ENCODE measurements at regions of chr2 and their contacts with region 1.

Region 1: DNA sequence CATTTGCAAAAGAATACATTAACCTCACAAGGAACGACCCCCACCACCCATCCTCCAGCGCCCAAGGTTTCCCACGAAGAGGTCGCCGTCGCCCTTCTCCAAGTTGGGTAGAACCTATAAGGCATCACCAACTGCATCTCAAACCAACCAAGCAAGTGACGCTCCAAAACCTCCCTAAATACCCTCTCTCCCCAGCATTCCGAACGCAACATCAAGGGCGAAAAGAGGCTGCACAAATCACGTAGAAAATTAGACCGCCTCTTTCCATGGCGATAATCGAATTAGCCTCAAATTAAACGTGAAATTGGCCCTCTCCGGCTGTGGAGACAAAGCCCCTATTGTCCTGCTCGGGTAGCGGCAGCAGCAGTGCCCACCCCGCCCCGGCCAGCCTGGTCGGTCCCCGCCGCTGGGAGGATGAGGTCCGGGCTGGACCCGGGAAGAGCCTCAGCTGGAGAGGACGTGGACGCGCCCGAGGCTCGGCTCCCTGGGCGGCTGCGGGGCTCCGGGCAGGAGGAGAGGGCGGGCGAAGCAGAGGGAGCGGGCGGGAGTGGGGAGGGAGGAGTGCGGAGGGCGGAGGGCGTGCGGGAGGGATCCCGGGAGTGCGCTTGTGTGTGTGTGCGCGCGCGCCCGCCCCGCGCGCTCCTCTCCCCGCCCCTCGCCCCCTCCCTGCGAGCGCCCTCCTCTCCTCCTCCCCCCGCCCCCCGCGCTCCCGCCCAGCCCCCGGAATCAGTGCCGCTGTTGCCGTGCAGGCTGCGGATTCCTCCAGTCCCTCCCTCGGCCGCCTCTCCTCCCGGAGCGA is at the start of gene SPTBN1:
- DNase-seq: peak; percentile 97
- H3K4me3 ChIP-seq: peak within 1 kb of the TSS; percentile 79 to 85 (median 83)
- H3K27ac ChIP-seq: peak within 1 kb of the TSS; percentile 96 to 98 (median 96)
- H3K4me1 ChIP-seq: peaks cover 0 to 40% (median 29%) of the 10 kb centered on the region in 4 donors
- H3K27me3 ChIP-seq: no peaks in the 10 kb centered on the region
- CTCF ChIP-seq: no peak
- EP300 ChIP-seq: no peak
- POLR2A ChIP-seq: peak; percentile 57 to 75
- total RNA-seq, gene SPTBN1: 169 to 273 (median 259) TPM

Region 2: DNA sequence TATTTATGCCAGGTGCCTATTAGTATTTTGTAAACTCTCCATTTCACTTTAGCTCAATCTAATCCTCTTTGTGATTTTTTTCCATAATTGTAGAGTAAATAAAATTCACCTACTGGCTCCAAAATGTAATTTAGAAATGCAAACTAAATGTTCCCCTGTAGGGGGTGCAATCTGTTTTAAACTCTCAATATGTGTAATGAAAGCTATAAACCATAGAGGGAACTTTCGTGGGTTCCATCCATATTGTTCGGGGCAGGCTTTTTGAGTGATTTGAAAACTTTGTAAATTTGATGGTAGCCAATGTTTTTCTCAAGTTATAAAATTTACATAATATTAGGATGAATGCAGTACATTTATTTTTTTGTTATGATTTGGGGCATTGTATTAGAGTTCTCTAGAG is 249.2 kb before region 1 on chr2:
- intact Hi-C with region 1: loop called (anchors 5 kb)
- DNase-seq: no peak
- H3K4me3 ChIP-seq: no peak overlapping the region
- H3K27ac ChIP-seq: no peak overlapping the region
- H3K4me1 ChIP-seq: peaks cover 0 to 21% (median 14%) of the 10 kb centered on the region in 4 donors
- H3K27me3 ChIP-seq: no peaks in the 10 kb centered on the region
- CTCF ChIP-seq: peak; percentile 51 to 63 (median 53)
- EP300 ChIP-seq: no peak
- POLR2A ChIP-seq: no peak

Region 3: GRCh38 chr2:54330162-54330925 is 125.4 kb before region 1 on chr2:
- intact Hi-C with region 1: loop called (anchors 2 kb)
- DNase-seq: peak; percentile 99
- H3K4me3 ChIP-seq: peak overlapping the region; percentile 45 to 67 (median 60)
- H3K27ac ChIP-seq: peak overlapping the region; percentile 84 to 95 (median 91)
- H3K4me1 ChIP-seq: peaks cover 0 to 18% (median 12%) of the 10 kb centered on the region in 4 donors
- H3K27me3 ChIP-seq: no peaks in the 10 kb centered on the region
- CTCF ChIP-seq: no peak
- EP300 ChIP-seq: peak in 1 of 4 donors; percentile 54
- POLR2A ChIP-seq: peak; percentile 75 to 86

Region 4: GRCh38 chr2:54522624-54523281 is 67.0 kb after region 1 on chr2:
- intact Hi-C with region 1: no loop called
- DNase-seq: no peak
- H3K4me3 ChIP-seq: no peak overlapping the region
- H3K27ac ChIP-seq: no peak overlapping the region
- H3K4me1 ChIP-seq: peaks cover 0 to 53% (median 32%) of the 10 kb centered on the region in 4 donors
- H3K27me3 ChIP-seq: no peaks in the 10 kb centered on the region
- CTCF ChIP-seq: peak; percentile 4 to 54 (median 44)
- EP300 ChIP-seq: no peak
- POLR2A ChIP-seq: no peak

Region 5: DNA sequence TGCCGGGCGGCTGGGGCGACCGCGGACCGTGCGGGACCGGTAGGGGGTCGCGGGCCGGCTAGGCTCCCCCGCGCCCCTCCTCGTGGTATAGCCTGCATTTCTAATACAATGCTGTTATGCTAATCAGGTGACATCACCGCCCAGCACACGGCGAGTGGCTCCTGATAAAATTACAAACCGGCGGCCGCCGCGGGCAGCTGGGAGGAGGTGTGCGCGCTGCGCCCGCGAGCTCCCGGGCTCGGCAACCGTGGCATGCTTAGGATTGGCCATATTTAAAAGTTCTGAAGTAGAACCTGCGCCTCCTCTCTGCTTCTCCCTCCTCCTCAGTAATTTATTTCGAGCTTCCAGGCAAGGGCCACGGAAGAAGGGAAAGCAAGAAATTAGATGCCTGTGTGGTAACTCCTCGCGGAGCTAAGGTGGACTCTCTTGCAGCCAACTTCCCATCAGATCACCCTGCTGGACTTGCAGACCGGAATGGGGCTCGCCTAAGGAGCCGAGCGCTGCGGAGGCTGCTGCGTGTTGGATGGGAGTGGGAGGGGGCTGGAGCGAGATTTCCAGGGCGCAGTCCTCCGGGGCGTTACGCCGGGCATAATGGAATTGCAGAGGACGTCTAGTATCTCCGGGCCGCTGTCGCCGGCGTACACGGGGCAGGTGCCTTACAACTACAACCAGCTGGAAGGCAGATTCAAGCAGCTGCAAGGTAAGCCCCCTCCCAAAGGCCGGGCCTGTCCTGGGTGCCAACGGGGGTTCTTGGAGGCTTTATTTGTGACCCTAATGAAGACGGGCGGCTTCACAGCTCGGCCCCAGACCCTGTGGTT is 102.6 kb after region 1 on chr2:
- intact Hi-C with region 1: loop called (anchors 5 kb)
- DNase-seq: peak; percentile 83
- H3K4me3 ChIP-seq: peak overlapping the region; percentile 27 to 58 (median 46)
- H3K27ac ChIP-seq: peak overlapping the region; percentile 71 to 92 (median 81)
- H3K4me1 ChIP-seq: peaks cover 0 to 57% (median 46%) of the 10 kb centered on the region in 4 donors
- H3K27me3 ChIP-seq: no peaks in the 10 kb centered on the region
- CTCF ChIP-seq: no peak
- EP300 ChIP-seq: no peak
- POLR2A ChIP-seq: peak in 1 of 2 donors; percentile 48

Region 6: DNA sequence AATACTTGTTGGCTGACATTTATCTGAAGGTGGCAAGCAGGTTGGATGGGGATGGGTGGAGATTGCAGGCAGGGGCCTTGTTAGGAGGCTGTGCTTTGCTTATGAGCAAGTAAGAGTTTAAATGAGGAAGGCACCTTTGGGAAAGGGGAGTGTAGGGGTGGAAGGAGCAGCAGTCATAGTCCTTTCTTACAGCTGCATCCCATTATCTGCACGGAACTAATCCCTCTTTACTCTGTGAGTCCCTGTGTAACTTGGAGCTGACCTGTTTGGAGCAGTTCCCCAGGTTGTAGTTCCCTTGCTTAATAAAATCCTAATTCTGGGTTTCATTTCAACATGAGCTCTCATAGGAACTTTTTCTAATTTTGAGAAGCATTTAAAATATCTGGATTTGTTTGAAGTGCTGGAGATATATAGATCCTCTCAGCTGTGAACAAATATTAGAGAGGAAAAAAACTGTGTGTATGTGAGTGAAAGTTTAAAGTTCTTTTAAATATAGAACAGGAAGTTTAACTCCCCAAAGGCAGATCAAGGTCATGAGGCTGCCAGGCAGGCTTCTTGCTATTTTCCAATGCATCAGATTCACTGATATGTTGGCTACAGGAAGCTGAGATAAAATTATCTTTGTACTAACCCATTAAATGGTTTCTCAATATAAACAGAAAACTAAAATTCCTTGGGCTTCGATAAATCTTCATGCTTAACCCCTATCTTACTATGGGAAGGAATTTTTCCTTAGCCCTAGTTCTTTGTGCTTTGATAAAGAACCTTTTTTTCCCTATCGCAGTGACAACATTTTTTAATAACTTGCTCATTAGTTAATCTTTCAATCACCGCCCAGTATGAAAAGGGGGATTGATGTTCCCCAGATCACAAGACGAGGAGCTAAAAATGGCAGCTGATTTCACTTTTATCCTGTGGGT is 163.1 kb after region 1 on chr2:
- intact Hi-C with region 1: loop called (anchors 5 kb)
- DNase-seq: no peak
- H3K4me3 ChIP-seq: no peak overlapping the region
- H3K27ac ChIP-seq: peak overlapping the region; percentile 27 to 64 (median 54)
- H3K4me1 ChIP-seq: peaks cover 3 to 45% (median 30%) of the 10 kb centered on the region in 4 donors
- H3K27me3 ChIP-seq: no peaks in the 10 kb centered on the region
- CTCF ChIP-seq: no peak
- EP300 ChIP-seq: no peak
- POLR2A ChIP-seq: no peak

Region 7: DNA sequence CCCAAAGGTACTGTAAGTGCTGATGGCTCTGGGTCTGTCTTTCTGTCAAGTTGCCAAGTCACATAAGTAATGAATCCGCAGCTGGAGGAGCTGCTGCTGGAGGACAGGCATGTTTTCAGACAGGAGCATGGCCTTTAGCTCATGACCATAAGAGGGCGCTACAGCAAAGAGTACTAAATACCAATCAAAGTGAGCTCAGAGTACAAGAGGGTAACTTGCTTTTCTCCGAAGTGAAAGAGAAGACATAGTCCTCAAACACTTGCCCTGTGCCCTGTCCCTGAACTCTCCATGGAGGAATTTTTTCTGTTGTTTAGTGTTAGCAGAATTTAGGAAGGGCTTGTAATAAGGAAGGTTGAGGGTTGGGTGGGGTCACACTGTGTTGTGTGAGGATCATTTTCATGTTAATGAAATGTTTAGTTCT is 209.7 kb after region 1 on chr2:
- intact Hi-C with region 1: loop called (anchors 5 kb)
- DNase-seq: no peak
- H3K4me3 ChIP-seq: no peak overlapping the region
- H3K27ac ChIP-seq: peak overlapping the region; percentile 78 to 89 (median 84)
- H3K4me1 ChIP-seq: peaks cover 0 to 57% (median 55%) of the 10 kb centered on the region in 4 donors
- H3K27me3 ChIP-seq: no peaks in the 10 kb centered on the region
- CTCF ChIP-seq: peak in 2 of 4 experiments; percentile 19 to 33
- EP300 ChIP-seq: no peak
- POLR2A ChIP-seq: no peak

Region 8: DNA sequence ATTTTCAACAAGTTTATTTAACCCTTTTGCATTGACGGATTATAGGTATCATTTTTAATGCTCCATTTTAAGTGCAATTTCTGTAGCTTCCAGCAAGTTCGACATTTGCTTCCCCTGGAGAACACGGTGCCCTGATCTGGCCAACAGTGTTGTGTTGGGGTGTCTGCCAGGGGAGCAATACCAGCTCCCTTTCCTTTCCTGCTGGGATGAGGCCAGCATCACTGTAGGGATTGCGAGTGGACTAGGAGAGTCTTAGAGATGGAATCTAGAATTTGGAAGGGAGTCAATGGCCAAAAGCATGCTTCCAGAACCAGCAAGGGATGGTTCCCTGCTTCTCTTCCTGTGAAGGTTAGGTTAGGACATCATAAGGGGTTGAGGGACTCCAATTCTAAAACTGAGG is 459.3 kb after region 1 on chr2:
- intact Hi-C with region 1: no loop called
- DNase-seq: no peak
- H3K4me3 ChIP-seq: no peak overlapping the region
- H3K27ac ChIP-seq: no peak overlapping the region
- H3K4me1 ChIP-seq: no peaks in the 10 kb centered on the region
- H3K27me3 ChIP-seq: no peaks in the 10 kb centered on the region
- CTCF ChIP-seq: no peak
- EP300 ChIP-seq: no peak
- POLR2A ChIP-seq: no peak

Measured in sigmoid colon (tissue), 7 donors.